Mammary epithelial cell (primary cell): ENCODE measurements at regions of chr15 and their contacts with region 1.

Region 1: GRCh38 chr15:82952158-82953081 is at the start of gene HOMER2:
- DNase-seq: peak; percentile 29
- H3K4me3 ChIP-seq: peak within 1 kb of the TSS; percentile 53 to 76 (median 66)
- H3K27ac ChIP-seq: no peak within 1 kb of the TSS
- H3K4me1 ChIP-seq: peaks cover 5% of the 10 kb centered on the region
- H3K27me3 ChIP-seq: peaks cover 4% of the 10 kb centered on the region
- CTCF ChIP-seq: no peak
- total RNA-seq, gene HOMER2: 22.9 to 30.0 TPM

Region 2: GRCh38 chr15:82530606-82531379 is 421.6 kb before region 1 on chr15:
- CTCF ChIA-PET with region 1: interaction called, 10 read pairs
- dilution Hi-C with region 1: no loop called
- in situ Hi-C with region 1: no loop called
- intact Hi-C with region 1: no loop called
- DNase-seq: peak; percentile 74
- H3K4me3 ChIP-seq: peak overlapping the region in 1 of 3 experiments; percentile 46
- H3K27ac ChIP-seq: no peak overlapping the region
- H3K4me1 ChIP-seq: peaks cover 7% of the 10 kb centered on the region
- H3K27me3 ChIP-seq: no peaks in the 10 kb centered on the region
- CTCF ChIP-seq: peak; percentile 67 to 79